Activated CD8-positive, alpha-beta T cell treated with anti-CD3 and anti-CD28 coated beads for 36 hours (primary cell): ENCODE measurements at regions of chr3 and their contacts with region 1.

Region 1: DNA sequence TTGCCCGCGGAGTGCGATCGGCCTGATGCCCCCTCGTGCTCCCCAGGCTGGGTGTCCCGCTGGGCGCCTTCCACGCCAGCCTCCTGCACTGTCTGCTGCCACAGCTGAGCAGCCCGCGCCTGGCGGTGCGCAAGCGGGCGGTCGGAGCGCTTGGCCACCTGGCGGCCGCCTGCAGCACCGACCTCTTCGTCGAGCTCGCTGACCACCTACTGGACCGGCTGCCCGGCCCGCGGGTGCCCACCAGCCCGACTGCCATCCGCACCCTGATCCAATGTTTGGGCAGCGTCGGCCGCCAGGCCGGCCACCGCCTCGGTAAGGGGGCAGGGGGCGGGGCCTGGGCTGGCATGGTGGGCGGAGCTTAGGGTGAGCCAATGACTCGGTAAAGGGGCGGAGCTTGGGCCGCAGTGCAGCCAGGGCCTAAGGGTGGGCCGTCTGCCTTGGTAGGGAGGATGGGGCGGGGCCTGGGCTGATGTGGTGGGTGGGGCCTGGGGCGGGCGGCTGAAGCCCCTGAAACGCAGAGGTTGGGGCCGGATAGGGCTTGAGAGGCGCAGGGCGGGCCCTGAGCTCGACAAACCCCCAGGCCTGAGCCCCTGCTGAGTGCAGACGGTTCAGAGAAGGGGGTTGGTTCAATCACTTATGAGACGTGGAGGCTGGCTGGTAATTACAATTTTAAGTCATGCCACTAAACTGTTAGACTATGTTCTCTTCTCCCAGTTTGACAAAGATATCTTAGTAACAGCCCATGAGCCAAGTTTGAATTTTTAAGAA is 13.7 kb downstream of the CAND2 start:
- DNase-seq: peak; percentile 97
- ATAC-seq: peak; percentile 100
- H3K4me3 Mint-ChIP-seq: peak overlapping the region; percentile 59
- H3K27ac Mint-ChIP-seq: peak overlapping the region; percentile 54
- H3K4me1 Mint-ChIP-seq: peaks cover 7% of the 10 kb centered on the region
- H3K27me3 Mint-ChIP-seq: no peaks in the 10 kb centered on the region
- CTCF ChIP-seq: peak; percentile 96

Region 2: DNA sequence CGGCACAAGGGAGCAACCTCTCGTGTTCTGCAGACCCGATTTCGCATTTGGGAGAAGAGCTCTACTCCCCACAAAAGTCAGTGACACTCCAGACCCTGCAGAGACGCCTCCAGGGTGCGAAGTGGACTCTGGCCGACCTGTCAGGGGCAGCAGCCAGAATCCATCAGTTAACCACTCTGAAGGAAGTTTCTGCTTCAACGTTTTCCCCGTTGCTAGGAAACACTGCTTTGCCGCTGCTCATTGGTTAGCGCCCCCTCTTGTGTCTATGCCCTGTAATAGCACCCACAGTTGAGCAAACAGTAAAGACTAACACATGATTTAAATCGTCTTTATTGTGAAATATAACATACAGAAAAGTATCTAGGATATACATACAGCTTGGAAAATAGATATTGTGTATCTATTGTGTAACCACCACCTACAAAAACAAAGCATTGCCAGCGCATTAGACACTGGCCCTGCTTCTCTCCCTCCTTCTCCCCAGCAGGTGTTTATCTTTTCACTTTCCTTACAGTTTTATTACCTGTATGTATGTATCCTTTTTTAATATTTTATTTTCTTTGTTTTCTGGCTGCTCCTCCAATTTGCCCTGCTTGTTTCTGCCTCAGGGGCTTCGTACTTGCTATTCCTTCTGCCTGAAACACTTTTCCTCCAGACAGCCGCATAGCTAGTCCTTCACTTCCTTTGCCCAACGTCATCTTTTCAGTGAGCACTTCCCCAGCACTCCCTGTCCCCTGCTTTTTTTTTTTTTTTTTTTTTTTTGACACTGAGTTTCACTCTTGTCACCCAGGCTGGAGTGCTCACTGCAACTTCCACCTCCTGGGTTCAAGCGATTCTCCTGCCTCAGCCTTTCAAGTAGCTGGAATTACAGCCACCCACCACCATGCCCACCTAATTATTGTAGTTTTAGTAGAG is 90.0 kb before region 1 on chr3:
- CTCF ChIA-PET with region 1: interaction called, 12 read pairs
- POLR2A ChIA-PET with region 1: no interaction called
- intact Hi-C with region 1: no loop called
- DNase-seq: peak; percentile 79
- ATAC-seq: peak; percentile 96
- H3K4me3 Mint-ChIP-seq: no peak overlapping the region
- H3K27ac Mint-ChIP-seq: peak overlapping the region; percentile 25
- H3K4me1 Mint-ChIP-seq: peaks cover 10% of the 10 kb centered on the region
- H3K27me3 Mint-ChIP-seq: no peaks in the 10 kb centered on the region
- CTCF ChIP-seq: peak; percentile 94

Region 3: GRCh38 chr3:12782172-12782815 is 27.9 kb before region 1 on chr3:
- CTCF ChIA-PET with region 1: interaction called, 38 read pairs
- POLR2A ChIA-PET with region 1: no interaction called
- intact Hi-C with region 1: no loop called
- DNase-seq: peak; percentile 34
- ATAC-seq: no peak
- H3K4me3 Mint-ChIP-seq: no peak overlapping the region
- H3K27ac Mint-ChIP-seq: no peak overlapping the region
- H3K4me1 Mint-ChIP-seq: no peaks in the 10 kb centered on the region
- H3K27me3 Mint-ChIP-seq: peaks cover 10% of the 10 kb centered on the region
- CTCF ChIP-seq: no peak

Region 4: GRCh38 chr3:12796171-12797123 is 13.8 kb before region 1 on chr3 and contains the start of gene CAND2:
- CTCF ChIA-PET with region 1: interaction called, 38 read pairs
- POLR2A ChIA-PET with region 1: interaction called, 15 read pairs
- intact Hi-C with region 1: no loop called
- DNase-seq: peak; percentile 53
- ATAC-seq: peak; percentile 81
- H3K4me3 Mint-ChIP-seq: peak within 1 kb of the TSS; percentile 70
- H3K27ac Mint-ChIP-seq: no peak within 1 kb of the TSS
- H3K4me1 Mint-ChIP-seq: peaks cover 3% of the 10 kb centered on the region
- H3K27me3 Mint-ChIP-seq: peaks cover 3% of the 10 kb centered on the region
- CTCF ChIP-seq: no peak
- total RNA-seq, gene CAND2: 1.5 to 1.9 TPM

Region 5: GRCh38 chr3:12822725-12823373 is 12.7 kb after region 1 on chr3:
- CTCF ChIA-PET with region 1: interaction called, 19 read pairs
- POLR2A ChIA-PET with region 1: interaction called, 4 read pairs
- intact Hi-C with region 1: no loop called
- DNase-seq: no peak
- ATAC-seq: no peak
- H3K4me3 Mint-ChIP-seq: no peak overlapping the region
- H3K27ac Mint-ChIP-seq: no peak overlapping the region
- H3K4me1 Mint-ChIP-seq: no peaks in the 10 kb centered on the region
- H3K27me3 Mint-ChIP-seq: no peaks in the 10 kb centered on the region
- CTCF ChIP-seq: no peak

Region 6: DNA sequence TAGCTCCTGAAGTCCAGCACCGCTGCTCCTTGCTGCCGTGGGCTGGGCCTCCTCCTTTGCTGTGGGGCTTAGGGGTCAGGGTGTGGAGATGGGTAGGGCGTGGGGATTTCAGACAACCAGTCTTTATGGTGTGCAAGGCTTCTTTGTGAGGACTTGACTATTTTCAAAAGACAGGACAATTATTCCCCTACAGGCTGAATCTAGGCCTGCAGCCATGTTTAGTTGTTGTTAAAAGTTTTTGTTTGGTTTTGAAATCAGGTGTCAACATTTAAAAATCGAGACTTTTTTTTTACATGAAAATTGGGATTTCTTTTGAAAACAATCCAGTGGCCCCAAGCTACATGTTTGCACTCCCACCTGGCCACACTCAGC is 20.6 kb after region 1 on chr3:
- CTCF ChIA-PET with region 1: interaction called, 17 read pairs
- POLR2A ChIA-PET with region 1: interaction called, 155 read pairs
- intact Hi-C with region 1: no loop called
- DNase-seq: no peak
- ATAC-seq: no peak
- H3K4me3 Mint-ChIP-seq: no peak overlapping the region
- H3K27ac Mint-ChIP-seq: no peak overlapping the region
- H3K4me1 Mint-ChIP-seq: no peaks in the 10 kb centered on the region
- H3K27me3 Mint-ChIP-seq: no peaks in the 10 kb centered on the region
- CTCF ChIP-seq: peak; percentile 49